ENCODE measurements at regions of chr12 and their contacts with region 1.

Region 1: DNA sequence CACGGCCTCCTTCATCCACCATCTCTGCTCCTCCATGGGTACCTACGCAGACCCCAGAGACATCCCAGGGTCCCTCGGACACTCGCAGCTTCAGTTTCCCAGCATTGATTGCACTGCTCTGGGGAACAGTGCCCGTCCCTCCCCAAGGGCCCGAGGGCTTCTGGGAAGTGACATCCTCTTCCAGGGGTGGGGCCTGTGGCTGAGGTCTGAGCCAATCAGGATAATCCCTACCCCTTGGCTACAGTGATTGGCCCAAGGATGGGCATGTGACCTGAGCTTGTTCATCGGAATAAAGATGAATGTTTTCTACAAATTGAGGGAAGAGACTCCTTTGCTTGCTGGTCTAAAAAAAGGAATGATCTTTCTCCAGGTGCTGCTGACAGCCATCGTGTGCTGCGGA is 37.3 kb upstream of the MYL2 start:
- DNase-seq: no peak
- ATAC-seq: no peak
- H3K4me3 ChIP-seq: peak overlapping the region in 1 of 2 experiments; percentile 7; a peak in 1 of 4 replicates
- H3K27ac ChIP-seq: no peak overlapping the region
- H3K4me1 ChIP-seq: no peaks in the 10 kb centered on the region
- H3K27me3 ChIP-seq: peaks cover 16% of the 10 kb centered on the region
- CTCF ChIP-seq: no peak

Region 2: GRCh38 chr12:110972866-110973265 is 15.2 kb after region 1 on chr12:
- CTCF ChIA-PET with region 1: no interaction called
- POLR2A ChIA-PET with region 1: no interaction called
- in situ Hi-C with region 1: no loop called
- intact Hi-C with region 1: no loop called
- DNase-seq: no peak
- ATAC-seq: no peak
- H3K4me3 ChIP-seq: no peak overlapping the region
- H3K27ac ChIP-seq: no peak overlapping the region
- H3K4me1 ChIP-seq: no peaks in the 10 kb centered on the region
- H3K27me3 ChIP-seq: no peaks in the 10 kb centered on the region
- CTCF ChIP-seq: no peak

Region 3: DNA sequence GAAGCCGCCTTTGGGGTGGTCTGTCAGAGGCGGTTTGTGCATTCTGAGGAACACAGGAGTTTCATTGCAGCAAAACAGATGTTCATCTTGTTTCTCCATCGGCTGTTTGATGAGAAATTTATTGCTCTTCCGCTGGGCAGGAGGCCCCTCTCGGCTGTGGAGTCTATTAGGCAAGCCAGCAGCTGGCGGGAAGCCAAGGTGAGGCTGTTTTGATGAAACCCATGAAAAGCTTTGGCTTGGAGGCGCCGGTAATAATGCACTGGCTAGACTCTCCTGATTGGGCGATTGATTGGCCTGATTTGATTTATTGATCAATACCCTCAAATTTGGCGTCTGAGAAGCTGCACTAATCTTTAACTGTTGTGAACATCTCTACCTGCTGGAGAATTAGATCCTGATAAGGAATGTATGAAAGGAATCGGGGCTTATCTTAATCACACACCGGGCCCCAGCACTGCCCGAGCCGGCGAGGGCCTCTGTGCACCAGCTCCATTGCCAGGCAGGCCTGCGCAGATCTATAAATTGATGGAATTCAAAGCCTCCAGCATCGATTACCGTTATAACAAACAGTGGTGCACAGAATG is 223.6 kb after region 1 on chr12:
- CTCF ChIA-PET with region 1: no interaction called
- POLR2A ChIA-PET with region 1: no interaction called
- in situ Hi-C with region 1: no loop called
- intact Hi-C with region 1: no loop called
- DNase-seq: no peak
- ATAC-seq: no peak
- H3K4me3 ChIP-seq: no peak overlapping the region
- H3K27ac ChIP-seq: no peak overlapping the region
- H3K4me1 ChIP-seq: no peaks in the 10 kb centered on the region
- H3K27me3 ChIP-seq: no peaks in the 10 kb centered on the region; the same call in 1 of the 2 replicates
- CTCF ChIP-seq: no peak

Region 4: DNA sequence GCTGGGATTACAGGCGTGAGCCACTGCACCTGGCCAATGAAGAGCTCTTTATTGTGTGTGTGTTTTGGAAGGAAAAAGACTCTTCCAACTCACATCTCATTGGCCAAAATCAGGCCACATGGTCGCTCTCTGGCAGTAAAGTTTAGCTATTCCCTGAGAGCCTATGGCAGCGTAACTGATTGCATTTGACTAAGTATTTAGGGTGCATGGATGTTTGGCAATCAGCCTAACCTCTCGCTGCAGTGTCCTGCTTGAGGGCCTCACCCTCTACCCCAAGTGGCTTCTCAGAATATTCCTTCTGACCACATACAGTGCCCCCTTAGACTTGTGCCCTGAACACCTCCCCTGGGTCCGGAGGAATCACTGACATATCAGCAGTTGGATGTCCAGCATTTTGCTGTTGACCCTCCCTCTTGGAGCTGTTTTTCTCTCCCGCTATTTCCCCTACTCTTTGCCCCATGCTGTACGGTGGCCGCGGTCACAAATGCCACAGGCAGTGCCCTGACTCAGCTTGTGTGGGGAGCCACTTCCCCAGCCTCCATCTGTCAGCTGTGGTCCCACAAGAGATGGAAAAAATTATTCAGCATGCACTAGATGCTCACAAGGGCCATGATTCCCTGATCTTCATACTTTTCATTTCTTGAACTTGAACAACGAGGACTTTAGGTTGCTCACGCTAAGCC is 401.7 kb after region 1 on chr12:
- CTCF ChIA-PET with region 1: no interaction called
- POLR2A ChIA-PET with region 1: interaction called, 15 read pairs
- in situ Hi-C with region 1: no loop called
- intact Hi-C with region 1: no loop called
- DNase-seq: no peak
- ATAC-seq: no peak
- H3K4me3 ChIP-seq: no peak overlapping the region
- H3K27ac ChIP-seq: no peak overlapping the region
- H3K4me1 ChIP-seq: peaks cover 4% of the 10 kb centered on the region
- H3K27me3 ChIP-seq: no peaks in the 10 kb centered on the region
- CTCF ChIP-seq: no peak